Activated B cell treated with CpG ODN at 0.5 μM for 24 hours (primary cell): ENCODE measurements at regions of chr7 and their contacts with region 1.

Region 1: DNA sequence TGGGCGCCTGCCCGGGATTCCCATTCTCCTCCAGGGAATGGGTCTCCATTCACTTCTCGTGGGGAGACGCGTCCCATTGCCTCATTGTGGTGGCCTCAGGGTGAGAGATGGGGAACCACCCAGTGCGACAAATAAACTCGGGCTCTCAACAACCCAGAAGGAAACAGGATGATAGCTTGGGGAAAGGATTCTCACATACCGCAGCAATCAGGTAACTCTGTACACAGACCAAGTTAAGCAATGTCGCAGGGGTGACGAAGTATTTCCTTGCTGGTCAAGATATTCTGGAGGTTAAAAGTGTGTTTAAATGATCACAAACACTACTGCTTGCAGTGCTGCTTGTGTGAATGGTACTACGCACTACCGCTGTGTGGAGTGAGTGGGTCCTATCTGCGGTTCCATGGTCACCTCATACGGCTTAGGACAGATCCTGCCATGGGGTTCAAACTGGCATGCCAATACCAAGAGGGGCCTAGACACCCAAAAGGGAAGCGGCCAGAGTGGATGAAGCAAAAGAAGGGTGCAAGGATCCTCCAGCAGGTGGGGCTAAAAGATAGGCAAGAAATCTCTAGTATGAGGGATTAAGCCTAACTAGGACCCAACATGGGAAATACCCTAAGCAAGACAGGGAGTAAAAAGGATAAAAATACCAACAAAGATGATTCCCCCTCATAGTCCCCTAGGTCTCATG is 143.8 kb upstream of the TMEM106B start:
- DNase-seq: no peak
- ATAC-seq: peak; percentile 50
- H3K4me3 Mint-ChIP-seq: no peak overlapping the region
- H3K27ac Mint-ChIP-seq: no peak overlapping the region
- H3K4me1 Mint-ChIP-seq: peaks cover 8% of the 10 kb centered on the region
- H3K27me3 Mint-ChIP-seq: no peaks in the 10 kb centered on the region
- CTCF ChIP-seq: no peak

Region 2: GRCh38 chr7:11427686-11428273 is 639.5 kb before region 1 on chr7:
- CTCF ChIA-PET with region 1: no interaction called
- POLR2A ChIA-PET with region 1: no interaction called
- intact Hi-C with region 1: loop called (anchors 5 kb)
- DNase-seq: no peak
- ATAC-seq: no peak
- H3K4me3 Mint-ChIP-seq: no peak overlapping the region
- H3K27ac Mint-ChIP-seq: no peak overlapping the region
- H3K4me1 Mint-ChIP-seq: no peaks in the 10 kb centered on the region
- H3K27me3 Mint-ChIP-seq: no peaks in the 10 kb centered on the region
- CTCF ChIP-seq: no peak

Region 3: DNA sequence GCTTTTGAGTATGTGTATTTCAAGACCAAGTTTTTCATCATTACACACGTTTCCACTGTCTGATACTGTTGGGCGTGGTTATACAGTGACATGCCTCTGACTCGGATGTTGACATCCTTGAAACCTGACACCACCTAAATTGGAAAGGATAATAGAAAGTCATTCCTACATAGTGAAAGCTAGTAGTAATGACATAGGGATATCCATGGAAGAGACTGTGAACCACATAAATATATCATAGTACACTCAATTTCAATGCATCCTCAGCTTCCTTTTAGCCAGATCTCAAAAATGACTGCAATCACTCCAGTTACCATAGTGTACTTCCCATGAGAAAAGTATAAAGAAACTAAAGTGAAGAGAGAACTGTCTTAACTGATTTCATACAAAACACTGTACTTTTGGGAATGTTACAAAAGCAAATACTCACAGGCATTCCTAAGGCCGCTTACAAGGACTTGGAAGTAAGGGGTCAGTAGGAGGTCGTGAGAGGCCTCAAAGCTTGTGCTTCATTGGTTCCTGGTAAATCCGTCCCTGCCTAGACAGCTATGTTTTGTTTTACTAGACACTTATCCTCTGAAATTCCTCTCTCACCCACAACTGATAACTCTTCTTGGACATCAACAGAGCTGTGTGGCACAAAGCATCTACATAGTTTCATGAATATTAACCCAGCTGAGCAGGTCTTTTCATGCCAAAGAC is 408.2 kb after region 1 on chr7:
- CTCF ChIA-PET with region 1: no interaction called
- POLR2A ChIA-PET with region 1: no interaction called
- intact Hi-C with region 1: no loop called
- DNase-seq: no peak
- ATAC-seq: no peak
- H3K4me3 Mint-ChIP-seq: no peak overlapping the region
- H3K27ac Mint-ChIP-seq: no peak overlapping the region
- H3K4me1 Mint-ChIP-seq: no peaks in the 10 kb centered on the region
- H3K27me3 Mint-ChIP-seq: no peaks in the 10 kb centered on the region
- CTCF ChIP-seq: no peak